Mammary epithelial cell (primary cell): ENCODE measurements at regions of chr7 and their contacts with region 1.

Region 1: DNA sequence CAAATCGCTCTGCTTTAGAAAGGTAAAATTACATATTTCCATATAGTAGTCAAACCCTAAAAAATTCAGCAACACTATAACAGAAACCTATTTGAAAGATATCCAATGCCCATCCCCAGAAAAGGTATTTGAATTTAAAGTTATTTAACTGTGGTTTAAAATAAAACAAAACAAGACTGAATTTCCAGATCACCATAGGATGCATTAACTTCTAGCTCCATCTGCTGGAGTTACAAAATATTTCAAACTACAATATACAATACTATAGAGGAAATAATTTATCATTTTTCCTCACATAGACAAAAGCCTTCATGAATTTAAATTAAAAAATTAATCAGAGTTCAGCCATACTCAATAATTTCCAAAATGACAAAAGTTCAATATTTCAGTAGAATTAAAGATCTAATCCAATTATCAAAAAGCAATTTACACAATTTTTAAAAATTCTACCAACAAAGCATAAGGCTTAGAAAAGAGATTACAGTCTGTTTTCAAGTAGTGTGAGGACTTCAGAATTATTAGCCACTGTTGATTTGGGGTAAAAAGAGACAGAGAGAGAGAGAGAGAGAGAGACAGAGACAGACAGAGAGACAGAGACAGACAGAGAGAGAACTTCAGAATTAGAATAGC is 75.9 kb downstream of the LMBR1 start:
- DNase-seq: no peak
- H3K4me3 ChIP-seq: no peak overlapping the region
- H3K27ac ChIP-seq: no peak overlapping the region
- H3K4me1 ChIP-seq: no peaks in the 10 kb centered on the region
- H3K27me3 ChIP-seq: no peaks in the 10 kb centered on the region
- CTCF ChIP-seq: peak; percentile 24 to 48

Region 2: GRCh38 chr7:155796381-155797261 is 1020.4 kb before region 1 on chr7:
- CTCF ChIA-PET with region 1: no interaction called
- dilution Hi-C with region 1: no loop called
- in situ Hi-C with region 1: loop called (anchors 10 to 25 kb)
- intact Hi-C with region 1: loop called (anchors 2 kb)
- DNase-seq: no peak
- H3K4me3 ChIP-seq: peak overlapping the region in 1 of 3 experiments; percentile 29
- H3K27ac ChIP-seq: no peak overlapping the region
- H3K4me1 ChIP-seq: no peaks in the 10 kb centered on the region
- H3K27me3 ChIP-seq: peaks cover 2% of the 10 kb centered on the region
- CTCF ChIP-seq: peak in 1 of 2 donors; percentile 57

Region 3: GRCh38 chr7:155804897-155805825 is 1011.9 kb before region 1 on chr7:
- CTCF ChIA-PET with region 1: no interaction called
- dilution Hi-C with region 1: no loop called
- in situ Hi-C with region 1: loop called (anchors 10 to 25 kb)
- intact Hi-C with region 1: loop called (anchors 2 kb)
- DNase-seq: peak; percentile 62
- H3K4me3 ChIP-seq: peak overlapping the region; percentile 32 to 54 (median 49)
- H3K27ac ChIP-seq: no peak overlapping the region
- H3K4me1 ChIP-seq: peaks cover 15% of the 10 kb centered on the region
- H3K27me3 ChIP-seq: peaks cover 27% of the 10 kb centered on the region
- CTCF ChIP-seq: peak; percentile 28 to 61

Region 4: GRCh38 chr7:156764016-156764669 is 52.9 kb before region 1 on chr7:
- CTCF ChIA-PET with region 1: no interaction called
- dilution Hi-C with region 1: no loop called
- in situ Hi-C with region 1: no loop called
- intact Hi-C with region 1: loop called (anchors 1 kb)
- DNase-seq: peak; percentile 58
- H3K4me3 ChIP-seq: no peak overlapping the region
- H3K27ac ChIP-seq: no peak overlapping the region
- H3K4me1 ChIP-seq: no peaks in the 10 kb centered on the region
- H3K27me3 ChIP-seq: no peaks in the 10 kb centered on the region
- CTCF ChIP-seq: peak; percentile 61 to 79

Region 5: DNA sequence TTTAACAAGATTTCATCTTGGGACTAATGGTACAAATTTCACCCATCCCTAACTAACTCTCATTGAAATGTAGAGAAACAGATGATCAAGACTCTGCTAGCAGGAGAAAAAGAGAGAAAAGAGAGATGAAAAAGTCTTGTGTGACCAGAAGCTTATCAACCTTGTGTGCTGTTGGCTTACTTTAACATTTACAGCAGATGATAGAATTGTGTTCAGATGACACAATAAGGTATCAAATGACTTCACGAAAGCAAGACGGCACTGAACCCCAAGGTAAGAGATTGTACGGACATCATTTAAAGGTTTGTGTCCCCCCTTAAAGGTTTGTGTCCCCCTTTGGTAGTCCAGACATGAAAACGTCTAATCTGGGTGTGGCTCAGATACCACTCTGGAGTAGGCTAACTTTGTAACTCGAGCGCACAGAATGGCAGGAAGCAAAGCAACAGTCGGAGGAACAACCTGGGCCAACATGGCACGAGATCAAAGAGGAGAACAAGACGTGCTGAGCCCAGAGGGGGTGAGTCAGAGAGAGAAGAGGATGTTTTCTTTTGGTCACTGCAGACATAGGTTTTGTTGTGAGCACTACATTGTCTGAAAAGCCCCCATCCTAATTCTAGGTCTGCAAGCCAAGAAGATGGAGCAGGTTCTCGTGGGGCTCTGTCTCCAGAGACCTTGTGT is 86.3 kb after region 1 on chr7:
- CTCF ChIA-PET with region 1: no interaction called
- dilution Hi-C with region 1: no loop called
- in situ Hi-C with region 1: no loop called
- intact Hi-C with region 1: no loop called
- DNase-seq: peak; percentile 79
- H3K4me3 ChIP-seq: no peak overlapping the region
- H3K27ac ChIP-seq: no peak overlapping the region
- H3K4me1 ChIP-seq: peaks cover 23% of the 10 kb centered on the region
- H3K27me3 ChIP-seq: no peaks in the 10 kb centered on the region
- CTCF ChIP-seq: no peak